Dorsolateral prefrontal cortex (tissue), 120 donors: ENCODE measurements at regions of chr10 and their contacts with region 1.

Region 1: GRCh38 chr10:72625608-72626443 is at the start of gene MICU1:
- DNase-seq: peak; percentile 93 to 97 (median 96)
- H3K4me3 ChIP-seq: peak within 1 kb of the TSS; percentile 52 to 99 (median 91)
- H3K27ac ChIP-seq: peak within 1 kb of the TSS in 58 of 59 donors; percentile 23 to 93 (median 76)
- H3K27me3 ChIP-seq: no peaks in the 10 kb centered on the region
- CTCF ChIP-seq: peak in 27 of 56 donors; percentile 0 to 49 (median 20)
- total RNA-seq, gene MICU1: 36.8 to 106 (median 81.0) TPM

Region 2: DNA sequence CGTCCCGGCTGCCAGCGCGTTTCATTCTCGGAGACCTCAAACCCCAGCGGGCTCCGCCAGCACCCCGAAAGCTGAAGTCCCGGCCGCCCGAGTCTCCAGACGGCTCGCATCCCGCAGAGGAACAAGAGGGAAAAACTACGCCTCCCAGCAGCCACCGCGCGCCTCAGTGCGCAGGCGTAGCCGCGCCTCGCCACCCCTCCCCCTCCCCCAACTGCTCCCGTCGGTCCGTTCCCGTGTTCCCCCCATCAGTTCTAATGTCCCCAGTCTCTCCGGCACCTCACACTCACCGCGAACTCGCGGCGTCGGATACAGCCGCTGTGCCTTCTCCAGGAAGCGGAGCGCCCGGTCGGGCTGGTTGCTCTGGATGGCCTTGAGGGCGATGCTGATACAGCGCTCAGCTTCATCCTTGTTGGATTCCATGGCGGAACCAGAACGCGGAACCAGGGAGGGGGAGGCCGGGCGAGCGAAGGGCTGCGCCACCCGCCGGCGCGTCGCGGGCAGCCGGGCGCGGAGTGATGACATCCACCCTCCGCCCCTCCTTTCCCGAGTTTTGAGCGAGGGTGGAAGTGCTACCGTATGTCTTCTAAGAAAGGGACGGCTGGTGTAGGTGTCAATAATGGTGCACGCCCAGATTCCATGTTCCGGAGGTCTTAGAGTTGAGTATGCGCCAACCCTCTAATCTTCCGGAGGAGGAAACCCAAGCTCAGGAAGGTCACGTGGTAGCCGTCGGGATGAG is 271.2 kb before region 1 on chr10 and contains the start of gene DNAJB12:
- intact Hi-C with region 1: loop called in 1 of 2 experiments (anchors 5 kb)
- DNase-seq: peak; percentile 79 to 93 (median 88)
- H3K4me3 ChIP-seq: peak within 1 kb of the TSS; percentile 66 to 100 (median 91)
- H3K27ac ChIP-seq: peak within 1 kb of the TSS; percentile 89 to 100 (median 98)
- H3K27me3 ChIP-seq: no peaks in the 10 kb centered on the region
- CTCF ChIP-seq: peak in 34 of 56 donors; percentile 3 to 52 (median 24)
- total RNA-seq, gene DNAJB12: 25.5 to 44.3 (median 34.1) TPM

Region 3: DNA sequence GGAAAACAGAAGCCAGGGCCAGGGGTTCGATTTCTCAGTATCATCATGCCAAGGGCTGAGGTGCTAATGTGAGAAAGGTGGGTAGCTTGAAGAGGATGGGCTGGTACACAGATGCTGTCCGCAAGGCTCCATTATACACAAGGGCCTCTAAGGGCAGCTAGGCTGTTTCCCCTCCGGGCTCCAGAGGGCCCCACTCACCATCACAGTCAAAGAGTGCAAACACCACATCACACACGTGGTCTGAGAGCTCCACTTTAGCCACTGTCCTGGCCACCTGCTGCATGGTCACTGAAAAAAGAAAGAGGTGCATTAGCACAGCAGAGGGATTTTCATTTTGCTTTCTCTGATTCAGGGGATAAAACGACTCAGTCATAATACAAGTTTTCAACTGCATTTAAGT is 250.2 kb before region 1 on chr10:
- intact Hi-C with region 1: loop called in 1 of 2 experiments (anchors 5 kb)
- DNase-seq: peak in 7 of 10 donors; percentile 37 to 70 (median 60)
- H3K4me3 ChIP-seq: no peak overlapping the region
- H3K27ac ChIP-seq: peak overlapping the region in 1 of 59 donors; percentile 13
- H3K27me3 ChIP-seq: no peaks in the 10 kb centered on the region
- CTCF ChIP-seq: peak in 51 of 56 donors; percentile 25 to 71 (median 50)

Region 4: DNA sequence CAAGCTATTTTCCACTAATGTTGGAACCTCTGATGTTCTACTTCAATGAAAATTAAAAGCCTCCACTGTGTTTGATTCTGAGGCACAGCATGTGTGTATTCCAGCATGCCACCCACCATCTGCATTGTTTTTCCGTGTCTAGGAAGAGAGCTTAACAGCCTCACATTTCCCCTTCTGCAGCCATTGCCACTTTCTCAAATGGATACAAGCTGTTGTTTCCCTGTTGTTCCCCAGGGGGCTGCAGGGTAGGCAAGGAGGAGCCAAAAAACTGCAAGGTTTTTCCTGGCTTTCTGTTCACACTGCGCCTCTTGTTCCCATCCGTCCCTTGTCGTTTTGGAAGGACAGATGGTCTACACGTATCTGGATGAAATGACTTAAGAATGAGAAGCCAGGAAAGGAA is 198.8 kb before region 1 on chr10:
- intact Hi-C with region 1: loop called in 1 of 2 experiments (anchors 10 kb)
- DNase-seq: peak in 2 of 10 donors; percentile 10 to 84
- H3K4me3 ChIP-seq: no peak overlapping the region
- H3K27ac ChIP-seq: peak overlapping the region in 51 of 59 donors; percentile 0 to 94 (median 65)
- H3K27me3 ChIP-seq: no peaks in the 10 kb centered on the region
- CTCF ChIP-seq: no peak

Region 5: GRCh38 chr10:72692057-72692910 is 66.5 kb after region 1 on chr10 and contains the start of gene MCU:
- intact Hi-C with region 1: loop called in 1 of 2 experiments (anchors 5 kb)
- DNase-seq: peak; percentile 88 to 98 (median 97)
- H3K4me3 ChIP-seq: peak within 1 kb of the TSS; percentile 48 to 94 (median 84)
- H3K27ac ChIP-seq: peak within 1 kb of the TSS; percentile 18 to 97 (median 88)
- H3K27me3 ChIP-seq: no peaks in the 10 kb centered on the region
- CTCF ChIP-seq: peak in 8 of 56 donors; percentile 2 to 25 (median 14)
- total RNA-seq, gene MCU: 12.0 to 32.9 (median 20.8) TPM

Region 6: DNA sequence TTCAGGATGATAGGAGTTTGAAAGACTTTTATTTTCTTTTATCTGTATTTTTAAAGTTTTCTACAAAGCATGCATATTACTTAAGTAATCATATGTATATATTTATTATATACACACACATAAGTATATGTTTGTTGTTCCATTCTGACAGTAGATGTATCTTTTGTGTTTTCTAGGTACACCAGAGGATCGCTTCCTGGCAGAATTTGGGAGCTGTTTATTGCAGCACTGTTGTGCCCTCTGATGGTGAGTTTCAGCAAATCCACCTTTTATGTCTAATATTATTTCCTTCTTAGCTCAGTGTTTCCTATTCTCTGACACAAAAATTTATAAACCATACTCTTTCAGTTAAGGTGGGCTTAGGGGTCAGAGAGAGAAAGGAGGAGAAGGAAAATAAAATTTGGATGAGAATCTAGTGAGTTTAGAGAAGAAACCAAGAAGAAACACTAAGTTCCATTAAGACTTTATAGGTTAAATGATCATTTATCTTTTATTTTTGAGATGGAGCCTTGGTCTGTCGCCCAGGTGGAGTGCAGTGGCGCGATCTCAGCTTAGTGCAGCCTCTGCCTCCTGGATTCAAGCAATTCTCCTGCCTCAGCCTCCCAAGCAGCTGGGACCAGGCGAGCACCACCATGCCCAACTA is 208.5 kb after region 1 on chr10:
- intact Hi-C with region 1: loop called in 1 of 2 experiments (anchors 10 kb)
- DNase-seq: peak in 4 of 10 donors; percentile 19 to 66 (median 55)
- H3K4me3 ChIP-seq: no peak overlapping the region
- H3K27ac ChIP-seq: no peak overlapping the region
- H3K27me3 ChIP-seq: no peaks in the 10 kb centered on the region
- CTCF ChIP-seq: peak; percentile 50 to 94 (median 78)